Heart left ventricle (tissue), 16 donors: ENCODE measurements at regions of chr15 and their contacts with region 1.

Region 1: GRCh38 chr15:34367101-34368081 is at the start of gene LPCAT4:
- DNase-seq: peak; percentile 89 to 94 (median 92)
- ATAC-seq: peak; percentile 82 to 96 (median 90)
- H3K4me3 ChIP-seq: peak within 1 kb of the TSS; percentile 62 to 99 (median 88)
- H3K27ac ChIP-seq: peak within 1 kb of the TSS; percentile 91 to 100 (median 98)
- H3K4me1 ChIP-seq: peaks cover 0 to 25% (median 15%) of the 10 kb centered on the region in 12 donors
- H3K27me3 ChIP-seq: no peaks in the 10 kb centered on the region
- CTCF ChIP-seq: peak; percentile 86 to 99 (median 96)
- POLR2A ChIP-seq: peak in 1 of 2 donors; percentile 75
- total RNA-seq, gene LPCAT4: 9.8 to 80.0 (median 44.8) TPM

Region 2: DNA sequence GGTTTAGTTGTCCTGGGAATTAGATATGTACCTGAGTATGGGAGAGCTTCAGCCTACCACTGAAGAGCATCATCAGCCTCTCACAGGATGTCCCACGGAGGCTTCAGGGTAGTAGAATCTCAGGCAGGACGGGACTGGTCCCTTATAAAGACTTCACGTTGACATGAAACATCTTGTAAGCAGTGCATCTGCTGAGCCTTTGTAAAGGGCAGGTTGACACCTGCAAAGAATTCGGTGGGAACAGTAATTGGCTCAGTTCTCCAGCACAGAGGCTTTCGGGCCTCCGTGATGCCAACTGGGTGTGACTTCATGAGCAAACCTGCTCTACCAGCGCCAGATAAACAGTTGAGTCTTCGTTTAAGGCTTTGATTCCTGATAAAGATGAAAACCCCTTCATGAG is 301.4 kb before region 1 on chr15:
- intact Hi-C with region 1: loop called in 1 of 10 experiments (anchors 10 kb)
- DNase-seq: no peak
- ATAC-seq: no peak
- H3K4me3 ChIP-seq: no peak overlapping the region
- H3K27ac ChIP-seq: no peak overlapping the region
- H3K4me1 ChIP-seq: peaks cover 0 to 5% (median 0%) of the 10 kb centered on the region in 12 donors
- H3K27me3 ChIP-seq: no peaks in the 10 kb centered on the region
- CTCF ChIP-seq: no peak
- POLR2A ChIP-seq: no peak

Region 3: GRCh38 chr15:34101366-34102175 is 265.8 kb before region 1 on chr15 and contains the starts of genes EMC7 and PGBD4:
- intact Hi-C with region 1: loop called in 5 of 10 experiments (anchors 1 to 10 kb)
- DNase-seq: peak; percentile 99
- ATAC-seq: peak; percentile 100
- H3K4me3 ChIP-seq: peak within 1 kb of the TSS; percentile 72 to 95 (median 86)
- H3K27ac ChIP-seq: peak within 1 kb of the TSS; percentile 4 to 95 (median 88)
- H3K4me1 ChIP-seq: peaks cover 6 to 34% (median 22%) of the 10 kb centered on the region in 12 donors
- H3K27me3 ChIP-seq: no peaks in the 10 kb centered on the region
- CTCF ChIP-seq: no peak
- POLR2A ChIP-seq: peak in 1 of 2 donors; percentile 77
- total RNA-seq, gene EMC7: 28.9 to 95.2 (median 59.1) TPM
- total RNA-seq, gene PGBD4: 0.95 to 2.1 (median 1.7) TPM

Region 4: GRCh38 chr15:34304613-34305012 is 62.8 kb before region 1 on chr15:
- intact Hi-C with region 1: no loop called
- DNase-seq: no peak
- ATAC-seq: no peak
- H3K4me3 ChIP-seq: no peak overlapping the region
- H3K27ac ChIP-seq: no peak overlapping the region
- H3K4me1 ChIP-seq: no peaks in the 10 kb centered on the region
- H3K27me3 ChIP-seq: no peaks in the 10 kb centered on the region
- CTCF ChIP-seq: no peak
- POLR2A ChIP-seq: no peak

Region 5: DNA sequence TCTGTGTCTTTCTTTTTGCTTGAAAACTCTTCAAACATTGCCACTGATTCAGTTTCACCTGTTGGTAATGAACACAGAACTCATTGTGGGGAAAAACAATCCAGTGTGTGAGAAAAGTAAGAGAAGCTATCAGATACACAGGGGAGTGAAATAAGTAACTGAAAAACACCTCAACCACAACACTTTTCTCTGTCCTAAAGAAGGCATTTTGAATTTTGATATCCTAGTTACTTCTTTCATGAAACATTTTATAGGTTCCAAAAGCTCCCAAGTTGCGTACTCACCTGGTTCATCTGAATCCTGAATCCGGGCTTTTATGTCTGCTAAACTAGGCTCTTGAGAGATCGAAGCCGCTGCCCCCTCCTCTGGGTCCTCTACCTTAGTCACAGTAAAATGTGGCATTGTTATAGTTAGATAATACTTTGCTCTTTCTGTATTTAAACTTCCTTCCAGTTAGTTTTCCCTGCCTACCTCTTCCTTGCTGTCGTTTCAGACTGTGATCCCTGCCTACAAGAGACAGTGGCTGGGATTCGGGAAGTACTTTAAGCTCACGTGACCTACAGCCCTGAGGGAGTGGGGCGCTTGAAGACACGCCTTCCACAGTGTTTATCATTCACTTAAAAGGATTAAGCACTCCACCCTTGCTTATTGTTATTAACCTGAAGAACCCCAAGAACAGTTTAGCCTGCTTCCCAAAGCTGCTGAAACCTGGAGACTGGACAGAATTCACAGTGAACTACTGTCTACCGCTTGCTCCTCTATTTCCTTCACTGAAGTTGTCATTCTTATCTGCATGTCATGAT is 48.9 kb before region 1 on chr15:
- intact Hi-C with region 1: loop called in 1 of 10 experiments (anchors 5 kb)
- DNase-seq: peak in 4 of 5 donors; percentile 55 to 75 (median 67)
- ATAC-seq: peak; percentile 92 to 98 (median 98)
- H3K4me3 ChIP-seq: peak overlapping the region; percentile 12 to 65 (median 62)
- H3K27ac ChIP-seq: peak overlapping the region; percentile 2 to 79 (median 52)
- H3K4me1 ChIP-seq: peaks cover 0 to 30% (median 14%) of the 10 kb centered on the region in 12 donors
- H3K27me3 ChIP-seq: no peaks in the 10 kb centered on the region
- CTCF ChIP-seq: no peak
- POLR2A ChIP-seq: peak in 1 of 2 donors; percentile 49

Region 6: GRCh38 chr15:34342737-34343575 is 24.4 kb before region 1 on chr15 and contains the starts of genes NOP10 and NUTM1:
- intact Hi-C with region 1: loop called in 4 of 10 experiments (anchors 1 kb)
- DNase-seq: peak; percentile 91 to 95 (median 92)
- ATAC-seq: peak; percentile 91 to 97 (median 95)
- H3K4me3 ChIP-seq: peak within 1 kb of the TSS; percentile 56 to 94 (median 84)
- H3K27ac ChIP-seq: peak within 1 kb of the TSS; percentile 60 to 96 (median 90)
- H3K4me1 ChIP-seq: peaks cover 0 to 37% (median 15%) of the 10 kb centered on the region in 12 donors
- H3K27me3 ChIP-seq: no peaks in the 10 kb centered on the region
- CTCF ChIP-seq: peak; percentile 87 to 99 (median 96)
- POLR2A ChIP-seq: peak in 1 of 2 donors; percentile 60
- total RNA-seq, gene NOP10: 96.4 to 217 (median 132) TPM
- total RNA-seq, gene NUTM1: not detected

Region 7: GRCh38 chr15:34456658-34457057 is 89.3 kb after region 1 on chr15:
- intact Hi-C with region 1: loop called in 1 of 10 experiments (anchors 10 kb)
- DNase-seq: no peak
- ATAC-seq: no peak
- H3K4me3 ChIP-seq: no peak overlapping the region
- H3K27ac ChIP-seq: no peak overlapping the region
- H3K4me1 ChIP-seq: no peaks in the 10 kb centered on the region
- H3K27me3 ChIP-seq: peaks cover 0 to 9% (median 0%) of the 10 kb centered on the region in 9 donors
- CTCF ChIP-seq: no peak
- POLR2A ChIP-seq: no peak

Region 8: GRCh38 chr15:34587717-34588674 is 220.6 kb after region 1 on chr15:
- intact Hi-C with region 1: loop called in 1 of 10 experiments (anchors 10 kb)
- DNase-seq: peak in 3 of 5 donors; percentile 43 to 62 (median 45)
- ATAC-seq: peak in 3 of 4 donors; percentile 61 to 76 (median 75)
- H3K4me3 ChIP-seq: peak overlapping the region in 9 of 12 donors; percentile 0 to 44 (median 29)
- H3K27ac ChIP-seq: peak overlapping the region in 2 of 12 donors; percentile 17 to 42
- H3K4me1 ChIP-seq: peaks cover 0 to 12% (median 5%) of the 10 kb centered on the region in 12 donors
- H3K27me3 ChIP-seq: peaks cover 0 to 14% (median 0%) of the 10 kb centered on the region in 9 donors
- CTCF ChIP-seq: peak; percentile 56 to 89 (median 76)
- POLR2A ChIP-seq: no peak